ENCODE measurements at regions of chr16 and their contacts with region 1.

Region 1: DNA sequence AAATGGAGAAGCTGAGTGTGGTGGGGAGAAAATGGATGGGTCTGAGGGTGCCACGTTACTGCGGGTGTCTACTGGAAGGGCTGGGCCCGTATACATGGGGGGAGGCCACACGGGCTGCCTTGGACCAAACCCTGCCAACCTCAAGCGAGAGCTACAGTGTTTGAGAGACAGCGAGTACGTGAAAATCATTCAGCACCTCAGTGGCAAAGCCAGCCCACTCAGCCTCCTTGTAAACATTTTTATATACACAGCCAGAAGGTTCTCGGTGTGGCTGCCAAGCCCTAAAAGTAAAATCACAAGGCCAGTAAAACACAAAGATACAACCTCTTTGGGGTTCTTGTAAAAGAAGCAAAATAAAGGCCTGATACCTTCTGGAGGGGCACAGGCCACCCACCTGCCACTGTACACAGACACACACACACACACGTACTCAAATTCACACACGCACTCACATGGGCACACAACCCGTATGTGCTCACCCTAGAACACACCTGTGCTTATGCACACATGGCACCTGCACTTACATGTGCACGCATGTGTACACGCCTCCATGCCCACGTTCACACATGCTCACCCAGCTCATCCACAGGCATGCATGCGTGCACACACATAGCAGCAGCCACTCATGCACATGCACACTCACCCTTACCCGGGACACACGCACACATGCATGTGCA is 102.8 kb downstream of the GSG1L start:
- DNase-seq: no peak
- ATAC-seq: no peak
- H3K4me3 ChIP-seq: no peak overlapping the region
- H3K27ac ChIP-seq: no peak overlapping the region
- H3K4me1 ChIP-seq: no peaks in the 10 kb centered on the region
- H3K27me3 ChIP-seq: no peaks in the 10 kb centered on the region
- CTCF ChIP-seq: no peak

Region 2: DNA sequence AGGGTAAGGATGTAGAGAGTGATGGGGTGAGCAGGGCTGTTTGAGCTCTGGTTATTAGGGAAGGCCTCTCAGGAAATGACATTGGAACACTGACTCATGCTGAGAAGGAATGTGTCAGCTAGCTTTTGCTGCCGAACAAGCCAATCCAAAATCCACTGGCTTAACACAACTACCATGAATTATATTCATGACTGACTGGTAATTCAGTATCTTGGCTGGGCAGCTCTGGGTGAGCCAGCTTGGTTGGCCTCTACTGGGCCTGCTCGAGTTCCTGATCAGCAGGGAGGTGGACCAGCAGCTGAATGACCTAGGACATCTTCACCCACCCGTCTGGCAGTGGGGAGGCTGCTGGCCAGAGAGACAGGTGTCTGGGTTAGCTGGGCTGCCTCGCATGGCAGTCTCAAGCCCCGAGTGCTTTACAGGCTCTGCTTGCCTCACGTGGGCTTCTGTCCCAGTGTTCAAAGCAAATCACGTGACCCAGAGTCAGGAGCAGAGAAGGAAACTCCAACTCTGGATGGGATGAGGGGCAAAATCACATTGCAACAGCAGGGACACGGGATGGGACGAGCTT is 201.4 kb before region 1 on chr16:
- intact Hi-C with region 1: no loop called
- DNase-seq: no peak
- ATAC-seq: no peak
- H3K4me3 ChIP-seq: no peak overlapping the region
- H3K27ac ChIP-seq: no peak overlapping the region
- H3K4me1 ChIP-seq: peaks cover 0 to 17% (median 0%) of the 10 kb centered on the region in 9 donors
- H3K27me3 ChIP-seq: no peaks in the 10 kb centered on the region
- CTCF ChIP-seq: no peak

Region 3: DNA sequence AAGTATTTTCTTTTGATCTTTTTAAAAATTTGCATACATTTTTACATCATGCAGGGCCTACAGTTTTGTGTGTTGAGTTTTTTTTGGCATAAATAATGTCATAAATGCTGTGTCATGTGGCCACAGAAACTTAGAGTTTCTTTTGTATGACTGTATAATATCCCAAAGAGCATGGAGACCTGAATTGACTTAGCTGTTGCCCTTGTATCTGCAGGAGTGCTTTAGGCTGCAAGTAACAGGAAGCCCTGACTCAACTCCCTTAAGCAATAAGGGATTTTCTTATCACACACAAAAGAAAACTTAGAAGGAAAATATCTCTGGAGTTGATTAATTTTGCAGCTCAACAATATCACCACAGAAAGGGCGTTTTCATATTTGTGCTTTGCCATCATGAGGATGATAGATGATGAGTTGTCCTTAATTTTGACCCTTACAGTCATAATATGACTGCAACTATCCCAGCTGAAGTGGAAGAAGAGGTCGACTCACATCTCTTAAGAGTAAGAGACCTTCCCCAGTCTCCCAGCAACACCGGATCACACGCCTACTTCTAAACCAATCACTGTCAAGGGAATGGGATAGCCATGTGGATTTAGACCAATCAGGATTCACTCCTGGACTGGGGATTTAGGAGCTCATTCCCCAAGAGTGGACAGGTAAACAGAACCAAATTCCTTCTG is 36.2 kb before region 1 on chr16:
- intact Hi-C with region 1: loop called in 1 of 10 experiments (anchors 1 kb)
- DNase-seq: no peak
- ATAC-seq: no peak
- H3K4me3 ChIP-seq: no peak overlapping the region
- H3K27ac ChIP-seq: no peak overlapping the region
- H3K4me1 ChIP-seq: no peaks in the 10 kb centered on the region
- H3K27me3 ChIP-seq: peaks cover 0 to 59% (median 7%) of the 10 kb centered on the region in 7 donors
- CTCF ChIP-seq: no peak

Region 4: GRCh38 chr16:28011971-28012445 is 51.3 kb after region 1 on chr16:
- intact Hi-C with region 1: no loop called
- DNase-seq: no peak
- ATAC-seq: peak in 1 of 8 donors; percentile 25
- H3K4me3 ChIP-seq: no peak overlapping the region
- H3K27ac ChIP-seq: peak overlapping the region in 1 of 10 donors; percentile 35
- H3K4me1 ChIP-seq: peaks cover 0 to 9% (median 0%) of the 10 kb centered on the region in 9 donors
- H3K27me3 ChIP-seq: peaks cover 0 to 57% (median 0%) of the 10 kb centered on the region in 7 donors
- CTCF ChIP-seq: no peak